ENCODE measurements at regions of chr11 and their contacts with region 1.

Region 1: DNA sequence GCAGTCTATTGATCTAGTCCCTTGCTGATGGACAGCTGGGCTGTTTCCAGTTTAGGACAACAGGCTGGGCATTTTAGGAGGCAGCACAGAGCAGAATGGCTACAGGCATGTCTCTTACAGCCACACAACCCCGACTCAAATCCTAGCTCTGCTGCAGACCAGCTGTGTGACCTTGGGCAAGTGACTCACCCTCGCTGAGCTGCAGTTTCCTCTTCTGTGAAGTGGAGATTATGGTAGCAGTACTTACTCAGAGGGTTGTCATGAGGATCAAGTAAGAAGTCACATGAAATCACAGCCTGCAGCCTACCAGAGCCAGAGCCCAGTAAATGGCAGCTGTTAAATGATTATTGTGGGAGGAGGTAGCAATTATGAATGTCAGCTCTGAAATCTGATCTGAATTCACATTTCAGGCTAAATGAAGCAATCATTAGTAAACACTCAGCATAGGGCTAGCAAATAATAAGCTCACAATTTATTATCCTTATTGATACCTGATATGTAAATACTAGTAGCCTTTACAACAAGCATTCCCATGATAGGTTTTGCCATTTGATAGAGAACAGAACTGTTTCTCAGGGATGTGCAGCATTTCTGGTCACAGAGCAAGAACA is 58.9 kb downstream of the MYEOV start:
- DNase-seq: peak; percentile 96
- H3K4me3 ChIP-seq: no peak overlapping the region
- H3K27ac ChIP-seq: peak overlapping the region; percentile 90
- H3K4me1 ChIP-seq: peaks cover 47% of the 10 kb centered on the region
- H3K27me3 ChIP-seq: no peaks in the 10 kb centered on the region
- CTCF ChIP-seq: no peak
- POLR2A ChIP-seq: peak; percentile 73

Region 2: GRCh38 chr11:69321877-69322361 is 30.9 kb before region 1 on chr11:
- CTCF ChIA-PET with region 1: interaction called, 3 read pairs
- POLR2A ChIA-PET with region 1: no interaction called
- dilution Hi-C with region 1: no loop called
- intact Hi-C with region 1: loop called (anchors 2 kb)
- DNase-seq: peak; percentile 77
- H3K4me3 ChIP-seq: no peak overlapping the region
- H3K27ac ChIP-seq: peak overlapping the region; percentile 91
- H3K4me1 ChIP-seq: peaks cover 44% of the 10 kb centered on the region
- H3K27me3 ChIP-seq: no peaks in the 10 kb centered on the region
- CTCF ChIP-seq: no peak
- POLR2A ChIP-seq: no peak

Region 3: GRCh38 chr11:69337211-69337721 is 15.6 kb before region 1 on chr11:
- CTCF ChIA-PET with region 1: no interaction called
- POLR2A ChIA-PET with region 1: no interaction called
- dilution Hi-C with region 1: no loop called
- intact Hi-C with region 1: no loop called
- DNase-seq: no peak
- H3K4me3 ChIP-seq: no peak overlapping the region
- H3K27ac ChIP-seq: no peak overlapping the region
- H3K4me1 ChIP-seq: no peaks in the 10 kb centered on the region
- H3K27me3 ChIP-seq: no peaks in the 10 kb centered on the region
- CTCF ChIP-seq: no peak
- POLR2A ChIP-seq: no peak

Region 4: DNA sequence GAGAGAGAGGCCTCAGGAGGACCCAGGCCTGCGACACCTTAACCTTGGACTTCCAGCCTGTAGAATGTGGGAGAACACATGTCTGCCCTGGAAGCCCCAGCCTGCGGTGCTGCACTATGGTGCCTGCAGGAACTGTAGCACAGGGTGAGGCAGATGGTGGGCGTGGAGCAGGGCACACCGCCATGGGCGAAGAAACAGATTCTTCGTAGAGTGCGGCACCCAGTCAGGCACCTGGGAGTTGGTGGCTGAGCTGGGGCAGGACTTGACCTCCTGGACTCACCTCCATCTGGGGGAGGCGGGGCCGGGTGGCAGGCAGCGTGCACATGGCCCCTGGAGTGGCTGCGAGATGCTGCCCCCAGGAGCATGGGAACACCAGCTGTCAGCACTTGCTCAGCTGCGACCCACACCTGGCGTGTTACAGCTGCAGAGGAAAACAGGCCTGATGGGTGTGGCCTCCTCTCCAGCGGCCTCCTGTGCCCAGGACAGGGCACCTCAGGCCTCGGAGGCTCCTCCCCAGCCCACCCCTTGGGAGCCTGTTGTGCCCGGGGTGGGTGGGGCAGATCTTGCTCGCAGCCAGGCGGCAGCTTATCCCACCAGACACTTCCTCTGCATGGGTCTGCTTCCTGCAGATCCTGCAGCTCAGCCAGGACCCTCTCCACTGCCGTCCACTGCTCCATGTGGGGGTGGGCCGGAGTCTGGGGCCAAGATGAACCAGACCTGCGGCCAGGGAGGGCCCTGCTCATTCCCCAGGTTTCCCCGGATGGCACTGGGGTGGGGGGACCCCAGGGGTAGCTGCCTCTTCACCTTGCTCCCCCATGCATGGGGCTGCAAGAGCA is 21.5 kb after region 1 on chr11:
- CTCF ChIA-PET with region 1: no interaction called
- POLR2A ChIA-PET with region 1: no interaction called
- dilution Hi-C with region 1: no loop called
- intact Hi-C with region 1: no loop called
- DNase-seq: peak; percentile 54
- H3K4me3 ChIP-seq: no peak overlapping the region
- H3K27ac ChIP-seq: no peak overlapping the region
- H3K4me1 ChIP-seq: no peaks in the 10 kb centered on the region
- H3K27me3 ChIP-seq: no peaks in the 10 kb centered on the region
- CTCF ChIP-seq: no peak
- POLR2A ChIP-seq: no peak

Region 5: GRCh38 chr11:69497221-69497787 is 144.5 kb after region 1 on chr11:
- CTCF ChIA-PET with region 1: interaction called, 4 read pairs
- POLR2A ChIA-PET with region 1: no interaction called
- dilution Hi-C with region 1: no loop called
- intact Hi-C with region 1: loop called (anchors 1 kb)
- DNase-seq: peak; percentile 83
- H3K4me3 ChIP-seq: no peak overlapping the region
- H3K27ac ChIP-seq: peak overlapping the region; percentile 57
- H3K4me1 ChIP-seq: peaks cover 29% of the 10 kb centered on the region
- H3K27me3 ChIP-seq: no peaks in the 10 kb centered on the region
- CTCF ChIP-seq: no peak
- POLR2A ChIP-seq: no peak